ENCODE measurements at regions of chr2 and their contacts with region 1.

Region 1: GRCh38 chr2:100381240-100381639 is 36.2 kb downstream of the CHST10 start:
- DNase-seq: peak in 1 of 2 donors; percentile 82
- H3K4me3 ChIP-seq: no peak overlapping the region
- H3K27ac ChIP-seq: no peak overlapping the region
- H3K4me1 ChIP-seq: no peaks in the 10 kb centered on the region
- H3K27me3 ChIP-seq: no peaks in the 10 kb centered on the region
- CTCF ChIP-seq: peak; percentile 64 to 84 (median 65)

Region 2: GRCh38 chr2:100136310-100136709 is 244.9 kb before region 1 on chr2:
- intact Hi-C with region 1: no loop called
- DNase-seq: no peak
- H3K4me3 ChIP-seq: no peak overlapping the region
- H3K27ac ChIP-seq: no peak overlapping the region
- H3K4me1 ChIP-seq: no peaks in the 10 kb centered on the region
- H3K27me3 ChIP-seq: no peaks in the 10 kb centered on the region
- CTCF ChIP-seq: no peak

Region 3: GRCh38 chr2:100262555-100263320 is 118.5 kb before region 1 on chr2:
- intact Hi-C with region 1: loop called (anchors 2 kb)
- DNase-seq: peak in 1 of 2 donors; percentile 80
- H3K4me3 ChIP-seq: no peak overlapping the region
- H3K27ac ChIP-seq: no peak overlapping the region
- H3K4me1 ChIP-seq: peaks cover 5 to 6% of the 10 kb centered on the region in 2 donors
- H3K27me3 ChIP-seq: no peaks in the 10 kb centered on the region
- CTCF ChIP-seq: peak; percentile 81 to 97 (median 93)

Region 4: GRCh38 chr2:100291120-100291970 is 89.9 kb before region 1 on chr2:
- intact Hi-C with region 1: no loop called
- DNase-seq: no peak
- H3K4me3 ChIP-seq: no peak overlapping the region
- H3K27ac ChIP-seq: no peak overlapping the region
- H3K4me1 ChIP-seq: no peaks in the 10 kb centered on the region
- H3K27me3 ChIP-seq: no peaks in the 10 kb centered on the region
- CTCF ChIP-seq: no peak

Measured in ascending aorta (tissue), 2 donors.